Brain microvascular endothelial cell (primary cell): ENCODE measurements at regions of chr5 and their contacts with region 1.

Region 1: GRCh38 chr5:119031905-119032304 is 39.0 kb upstream of the DMXL1 start:
- DNase-seq: peak; percentile 5
- H3K4me3 ChIP-seq: no peak overlapping the region
- H3K27ac ChIP-seq: no peak overlapping the region
- H3K27me3 ChIP-seq: no peaks in the 10 kb centered on the region
- CTCF ChIP-seq: no peak

Region 2: GRCh38 chr5:119411935-119412602 is 380.2 kb after region 1 on chr5:
- in situ Hi-C with region 1: loop called (anchors 25 kb)
- DNase-seq: peak; percentile 81
- H3K4me3 ChIP-seq: peak overlapping the region; percentile 54
- H3K27ac ChIP-seq: peak overlapping the region; percentile 27
- H3K27me3 ChIP-seq: no peaks in the 10 kb centered on the region
- CTCF ChIP-seq: peak; percentile 71